Activated T-helper 1 cell treated with anti-CD3 and anti-CD28 coated beads, Interleukin-12 subunit alpha, Interleukin-12 subunit beta, Interleukin-2, Interleukin-4 antibody, amounts not matched to agents 30 ng/mL and 10 ng/mL and 1 ng/mL, durations not matched to agents 14 hours and 24 hours and 36 hours (primary cell): ENCODE measurements at regions of chr10 and their contacts with region 1.

Region 1: GRCh38 chr10:71727738-71728737 is 8.5 kb upstream of the C10orf105 start:
- DNase-seq: peak; percentile 51
- H3K4me3 Mint-ChIP-seq: peak overlapping the region; percentile 59
- H3K27ac Mint-ChIP-seq: peak overlapping the region; percentile 99
- H3K4me1 Mint-ChIP-seq: peaks cover 66% of the 10 kb centered on the region
- H3K27me3 Mint-ChIP-seq: no peaks in the 10 kb centered on the region

Region 2: DNA sequence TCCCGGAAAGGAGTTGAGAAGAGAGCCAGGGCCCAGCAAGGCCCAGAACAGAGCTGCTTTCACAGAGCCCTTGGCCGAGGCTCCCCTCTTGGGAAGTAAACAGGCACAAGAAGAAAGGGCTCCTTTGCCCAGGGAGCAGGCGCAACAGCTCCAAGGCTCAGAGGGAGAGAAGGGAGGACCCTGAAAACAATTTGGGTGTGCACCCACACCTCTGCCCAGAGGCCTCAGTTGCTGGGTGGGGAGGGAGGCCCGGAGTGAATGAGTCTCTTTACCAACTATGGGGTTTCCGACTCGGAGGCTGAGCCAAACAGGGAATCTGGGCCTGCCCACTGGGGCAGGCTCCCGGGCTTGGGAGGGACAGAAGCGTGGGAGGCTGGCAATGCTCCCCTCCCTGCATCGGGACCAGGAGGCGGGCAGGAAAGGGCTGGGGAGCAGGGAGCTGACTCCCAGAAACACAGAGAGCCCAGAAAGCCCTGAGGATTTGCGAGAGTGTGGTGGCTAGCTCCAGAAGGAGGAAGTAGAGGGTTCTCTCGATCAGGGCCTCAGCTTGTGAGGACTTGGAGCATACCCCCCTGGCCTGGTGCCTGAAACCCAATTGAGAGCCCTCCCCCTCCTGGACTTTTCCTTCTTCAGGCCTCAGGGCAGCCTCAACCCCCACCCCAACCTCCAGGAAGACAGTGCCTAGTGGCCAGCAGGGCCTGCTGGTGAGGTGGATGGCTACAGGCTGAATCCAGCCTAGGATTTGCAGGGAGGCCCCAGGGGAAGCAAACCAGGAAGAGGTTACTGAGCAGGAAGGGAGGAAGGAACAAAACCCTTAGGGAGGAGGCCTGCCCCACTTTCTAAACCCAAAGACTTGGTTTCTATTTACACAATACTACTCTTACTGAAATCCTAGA is 14.7 kb before region 1 on chr10:
- intact Hi-C with region 1: loop called (anchors 1 kb)
- DNase-seq: no peak
- H3K4me3 Mint-ChIP-seq: peak overlapping the region; percentile 63
- H3K27ac Mint-ChIP-seq: peak overlapping the region; percentile 96
- H3K4me1 Mint-ChIP-seq: peaks cover 45% of the 10 kb centered on the region
- H3K27me3 Mint-ChIP-seq: no peaks in the 10 kb centered on the region

Region 3: GRCh38 chr10:71756311-71757191 is 28.5 kb after region 1 on chr10:
- intact Hi-C with region 1: loop called (anchors 1 kb)
- DNase-seq: no peak
- H3K4me3 Mint-ChIP-seq: peak overlapping the region; percentile 70
- H3K27ac Mint-ChIP-seq: peak overlapping the region; percentile 94
- H3K4me1 Mint-ChIP-seq: peaks cover 82% of the 10 kb centered on the region
- H3K27me3 Mint-ChIP-seq: no peaks in the 10 kb centered on the region

Region 4: DNA sequence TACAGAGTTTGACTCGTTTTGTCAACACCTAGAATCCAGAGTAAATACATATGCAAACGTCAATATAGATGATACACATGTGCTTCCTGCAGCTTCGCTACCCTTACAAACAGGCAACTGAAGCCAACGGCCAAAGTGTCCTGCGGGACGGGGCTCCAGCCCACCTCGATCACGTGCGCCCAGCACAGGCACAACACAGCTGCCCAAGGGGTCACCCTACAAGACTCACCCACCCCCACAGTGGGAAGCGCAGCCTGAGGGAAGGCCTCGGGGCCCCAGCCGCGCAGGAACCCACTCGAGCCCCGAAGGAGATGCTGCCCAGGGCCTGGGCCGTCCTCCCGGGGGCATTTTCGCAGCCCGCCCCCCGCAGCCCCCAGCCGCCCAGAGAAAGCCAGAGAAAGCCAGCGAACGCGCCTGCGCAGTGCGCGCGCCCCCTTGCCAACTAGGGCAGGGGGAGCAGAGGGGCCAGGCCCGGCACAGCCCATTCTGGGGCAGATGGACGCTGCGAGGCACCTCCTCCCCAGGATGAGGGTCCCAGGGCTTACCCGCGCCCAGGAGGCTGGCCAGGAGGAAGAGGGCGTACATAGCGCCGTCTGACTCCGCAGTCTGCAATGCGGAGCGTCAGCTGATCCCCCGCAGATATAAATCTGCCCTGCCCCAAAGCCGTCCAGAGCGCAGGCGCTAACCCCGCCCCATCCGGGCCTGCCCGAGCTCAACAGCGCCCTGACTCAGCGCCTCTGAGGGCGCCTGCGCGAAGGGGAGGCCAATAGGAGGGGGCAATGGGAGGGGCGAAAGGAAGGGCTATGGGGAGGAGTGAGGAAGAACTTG is 122.8 kb after region 1 on chr10 and contains the start of gene PSAP:
- intact Hi-C with region 1: loop called (anchors 1 kb)
- DNase-seq: peak; percentile 99
- H3K4me3 Mint-ChIP-seq: peak within 1 kb of the TSS; percentile 97
- H3K27ac Mint-ChIP-seq: peak within 1 kb of the TSS; percentile 85
- H3K4me1 Mint-ChIP-seq: peaks cover 42% of the 10 kb centered on the region
- H3K27me3 Mint-ChIP-seq: no peaks in the 10 kb centered on the region
- total RNA-seq, gene PSAP: 117 and 122 TPM in 2 replicates

Region 5: DNA sequence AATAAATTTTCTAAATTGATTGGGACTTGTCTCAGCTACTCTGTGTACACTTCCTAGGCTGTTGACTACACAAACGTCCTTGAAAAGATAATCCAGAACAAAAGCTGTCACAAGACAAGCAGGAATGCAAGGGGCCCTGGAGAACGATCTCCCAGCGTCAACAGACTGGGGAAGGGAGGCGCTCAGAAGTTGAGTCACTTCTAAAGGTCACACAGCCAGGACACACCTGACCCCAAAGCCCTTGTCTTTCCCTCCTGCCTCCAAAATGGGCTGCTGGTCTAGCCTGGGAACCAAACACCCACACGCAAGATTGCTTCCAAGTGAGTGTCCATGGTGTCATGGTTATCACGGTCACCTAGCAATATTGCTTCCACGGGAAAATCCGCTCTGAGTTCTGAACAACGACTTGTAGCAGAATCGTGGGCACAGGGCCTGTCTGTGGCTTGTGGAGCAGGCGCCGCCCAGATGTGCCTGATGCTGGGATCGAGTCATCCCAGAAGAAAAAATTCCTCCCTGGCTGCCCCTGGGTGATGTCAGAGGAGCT is 310.5 kb after region 1 on chr10:
- intact Hi-C with region 1: no loop called
- DNase-seq: no peak
- H3K4me3 Mint-ChIP-seq: no peak overlapping the region
- H3K27ac Mint-ChIP-seq: no peak overlapping the region
- H3K4me1 Mint-ChIP-seq: no peaks in the 10 kb centered on the region
- H3K27me3 Mint-ChIP-seq: peaks cover 2% of the 10 kb centered on the region

Region 6: GRCh38 chr10:72088889-72089575 is 361.0 kb after region 1 on chr10:
- intact Hi-C with region 1: loop called (anchors 10 kb)
- DNase-seq: peak; percentile 47
- H3K4me3 Mint-ChIP-seq: peak overlapping the region; percentile 99
- H3K27ac Mint-ChIP-seq: peak overlapping the region; percentile 99
- H3K4me1 Mint-ChIP-seq: peaks cover 62% of the 10 kb centered on the region
- H3K27me3 Mint-ChIP-seq: no peaks in the 10 kb centered on the region